ENCODE measurements at regions of chr12 and their contacts with region 1.

Region 1: DNA sequence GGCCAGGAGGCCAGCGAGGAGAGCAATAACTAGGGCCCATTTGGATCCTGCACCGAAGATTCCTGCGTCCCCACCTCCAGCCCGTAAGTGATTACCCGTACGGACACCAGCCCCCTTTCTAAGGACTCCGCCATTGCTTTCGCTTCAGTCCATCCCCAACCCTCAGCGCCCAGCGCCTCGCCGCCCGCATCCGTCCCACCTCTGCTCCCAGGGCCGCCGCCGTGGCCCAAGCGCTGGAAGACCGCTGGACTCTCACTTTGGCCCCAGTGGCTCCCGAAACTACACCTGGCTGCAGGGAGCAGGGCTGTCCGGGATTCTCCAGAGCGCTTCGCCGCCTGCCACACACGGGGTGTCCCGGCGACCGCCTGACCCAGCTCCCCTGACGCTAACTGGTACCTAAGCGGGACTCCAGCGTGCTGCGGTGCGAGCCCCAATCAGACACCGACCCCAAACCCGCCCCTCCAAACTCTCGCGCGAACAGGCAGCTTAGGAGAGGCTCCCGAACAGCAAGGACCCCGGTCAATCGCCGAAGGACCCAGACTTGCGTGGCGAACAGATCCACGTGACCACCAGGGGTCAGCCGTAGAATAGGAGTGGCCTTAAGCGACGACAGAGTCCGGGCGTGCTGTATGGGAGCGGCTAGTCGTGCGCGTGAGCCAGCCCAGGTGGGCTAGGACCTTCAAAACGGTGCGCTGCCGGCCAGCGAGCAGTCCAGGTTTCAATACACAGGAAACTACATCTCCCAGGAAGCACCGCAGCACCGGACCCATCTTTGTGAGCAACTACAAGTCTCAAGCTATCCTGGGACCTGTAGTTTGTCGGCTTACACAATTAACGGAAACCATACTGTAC is at the start of gene CNPY2:
- DNase-seq: peak; percentile 87 to 93 (median 92)
- H3K4me3 ChIP-seq: peak within 1 kb of the TSS; percentile 59 to 96 (median 95)
- H3K4me3 Mint-ChIP-seq: peak within 1 kb of the TSS; percentile 96 to 97
- H3K27ac ChIP-seq: peak within 1 kb of the TSS; percentile 91 to 98
- H3K27ac Mint-ChIP-seq: peak within 1 kb of the TSS; percentile 98 to 100 (median 98)
- H3K4me1 ChIP-seq: peaks cover 14 to 20% of the 10 kb centered on the region in 2 donors
- H3K4me1 Mint-ChIP-seq: peaks cover 19% of the 10 kb centered on the region
- H3K27me3 ChIP-seq: no peaks in the 10 kb centered on the region
- H3K27me3 Mint-ChIP-seq: no peaks in the 10 kb centered on the region
- CTCF ChIP-seq: no peak
- polyA plus RNA-seq, gene CNPY2: 50.4 to 122 (median 121) TPM

Region 2: DNA sequence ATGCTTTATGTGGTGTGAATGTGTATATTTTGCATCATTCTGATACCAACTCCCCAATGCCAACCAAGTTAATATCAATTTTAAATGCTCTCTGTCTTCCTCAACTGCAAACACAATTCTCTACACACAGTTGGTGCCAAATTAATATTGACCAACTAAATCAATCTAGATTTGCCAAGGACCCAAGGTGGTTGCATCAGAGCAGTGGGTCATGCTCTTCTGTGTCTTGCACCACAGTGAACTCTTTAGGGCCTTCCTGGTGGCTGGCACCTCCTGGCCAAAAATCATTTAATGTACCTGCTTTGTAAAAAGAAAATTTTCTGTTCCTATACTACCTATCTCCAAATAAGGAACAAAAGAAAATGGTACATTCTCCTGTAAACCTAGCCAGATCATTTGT is 35.0 kb before region 1 on chr12:
- intact Hi-C with region 1: no loop called
- DNase-seq: no peak
- H3K4me3 ChIP-seq: no peak overlapping the region
- H3K4me3 Mint-ChIP-seq: no peak overlapping the region
- H3K27ac ChIP-seq: peak overlapping the region in 1 of 2 donors; percentile 2
- H3K27ac Mint-ChIP-seq: peak overlapping the region in 1 of 7 donors; percentile 18
- H3K4me1 ChIP-seq: no peaks in the 10 kb centered on the region
- H3K4me1 Mint-ChIP-seq: no peaks in the 10 kb centered on the region
- H3K27me3 ChIP-seq: no peaks in the 10 kb centered on the region
- H3K27me3 Mint-ChIP-seq: peaks cover 0 to 2% (median 0%) of the 10 kb centered on the region in 3 donors
- CTCF ChIP-seq: no peak

Region 3: GRCh38 chr12:56299853-56300643 is 15.8 kb before region 1 on chr12 and contains the start of gene CS:
- intact Hi-C with region 1: loop called in 1 of 2 experiments (anchors 2 kb)
- DNase-seq: peak; percentile 97 to 98 (median 98)
- H3K4me3 ChIP-seq: peak within 1 kb of the TSS; percentile 61 to 84 (median 66)
- H3K4me3 Mint-ChIP-seq: peak within 1 kb of the TSS; percentile 93 to 98
- H3K27ac ChIP-seq: peak within 1 kb of the TSS; percentile 84 to 95
- H3K27ac Mint-ChIP-seq: peak within 1 kb of the TSS; percentile 94 to 97 (median 97)
- H3K4me1 ChIP-seq: peaks cover 41 to 49% of the 10 kb centered on the region in 2 donors
- H3K4me1 Mint-ChIP-seq: peaks cover 50% of the 10 kb centered on the region
- H3K27me3 ChIP-seq: no peaks in the 10 kb centered on the region
- H3K27me3 Mint-ChIP-seq: peaks cover 0 to 2% (median 0%) of the 10 kb centered on the region in 3 donors
- CTCF ChIP-seq: no peak
- polyA plus RNA-seq, gene CS: 55.7 to 156 (median 86.1) TPM

Region 4: DNA sequence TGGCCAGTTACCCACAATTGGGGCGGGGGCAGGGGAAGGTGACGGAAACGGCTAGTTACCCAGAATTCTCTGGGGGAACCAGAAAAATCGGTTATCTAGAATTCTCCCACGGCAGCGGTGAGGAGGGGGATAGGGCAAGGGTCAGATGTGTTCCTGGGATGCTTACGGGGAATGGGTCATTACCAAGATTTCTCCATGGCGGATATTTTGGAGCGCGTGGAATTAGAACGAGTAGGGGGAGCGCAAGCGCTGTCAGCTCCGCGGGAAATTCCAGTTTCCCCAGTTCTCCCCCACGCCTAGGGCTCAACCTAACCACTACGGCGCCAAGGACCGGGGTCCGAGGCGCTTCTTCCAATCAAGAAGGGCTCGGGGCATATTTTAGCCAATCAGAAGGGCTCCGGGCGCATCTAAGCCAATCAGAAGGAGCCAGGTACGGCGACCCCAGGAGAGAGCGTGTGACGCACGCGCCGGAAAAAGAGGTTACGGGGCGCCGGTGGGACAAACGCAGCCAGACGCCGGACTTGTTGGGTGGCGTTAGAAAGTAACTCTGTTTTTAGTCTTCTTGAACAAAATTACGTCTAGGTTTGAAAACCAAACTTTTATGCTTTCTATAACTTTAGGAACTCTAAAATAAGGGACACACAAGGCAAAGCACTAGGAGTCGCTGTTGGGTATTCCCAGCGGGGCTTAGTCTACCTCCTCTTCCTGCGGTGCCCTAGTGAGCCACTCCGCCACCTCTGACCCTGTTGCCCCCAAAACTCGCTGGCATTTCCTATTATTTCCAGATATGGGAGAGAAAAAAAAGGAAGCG is 18.0 kb after region 1 on chr12 and contains the start of gene PAN2:
- intact Hi-C with region 1: loop called in 1 of 2 experiments (anchors 2 kb)
- DNase-seq: peak; percentile 93 to 97 (median 93)
- H3K4me3 ChIP-seq: peak within 1 kb of the TSS; percentile 50 to 79 (median 64)
- H3K4me3 Mint-ChIP-seq: peak within 1 kb of the TSS; percentile 83 to 94
- H3K27ac ChIP-seq: peak within 1 kb of the TSS; percentile 94 to 99
- H3K27ac Mint-ChIP-seq: peak within 1 kb of the TSS; percentile 99 to 100 (median 100)
- H3K4me1 ChIP-seq: peaks cover 53 to 56% of the 10 kb centered on the region in 2 donors
- H3K4me1 Mint-ChIP-seq: peaks cover 53% of the 10 kb centered on the region
- H3K27me3 ChIP-seq: no peaks in the 10 kb centered on the region
- H3K27me3 Mint-ChIP-seq: peaks cover 0 to 3% (median 2%) of the 10 kb centered on the region in 3 donors
- CTCF ChIP-seq: peak; percentile 74
- polyA plus RNA-seq, gene PAN2: 8.8 to 120 (median 16.0) TPM

Region 5: GRCh38 chr12:56529290-56530055 is 213.6 kb after region 1 on chr12:
- intact Hi-C with region 1: no loop called
- DNase-seq: no peak
- H3K4me3 ChIP-seq: no peak overlapping the region
- H3K4me3 Mint-ChIP-seq: no peak overlapping the region
- H3K27ac ChIP-seq: no peak overlapping the region
- H3K27ac Mint-ChIP-seq: no peak overlapping the region
- H3K4me1 ChIP-seq: no peaks in the 10 kb centered on the region
- H3K4me1 Mint-ChIP-seq: peaks cover 11% of the 10 kb centered on the region
- H3K27me3 ChIP-seq: no peaks in the 10 kb centered on the region
- H3K27me3 Mint-ChIP-seq: peaks cover 0 to 1% (median 0%) of the 10 kb centered on the region in 3 donors
- CTCF ChIP-seq: no peak

Measured in CD14-positive monocyte (primary cell).